Activated CD4-positive, alpha-beta T cell treated with anti-CD3 and anti-CD28 coated beads for 36 hours (primary cell): ENCODE measurements at regions of chr19 and their contacts with region 1.

Region 1: GRCh38 chr19:35612559-35613321 is at the start of gene HAUS5:
- DNase-seq: peak; percentile 98
- ATAC-seq: peak; percentile 96
- H3K4me3 Mint-ChIP-seq: peak within 1 kb of the TSS; percentile 81
- H3K27ac Mint-ChIP-seq: peak within 1 kb of the TSS; percentile 90
- H3K4me1 Mint-ChIP-seq: peaks cover 23% of the 10 kb centered on the region
- H3K27me3 Mint-ChIP-seq: no peaks in the 10 kb centered on the region
- total RNA-seq, gene HAUS5: 39.7 to 41.0 TPM

Region 2: DNA sequence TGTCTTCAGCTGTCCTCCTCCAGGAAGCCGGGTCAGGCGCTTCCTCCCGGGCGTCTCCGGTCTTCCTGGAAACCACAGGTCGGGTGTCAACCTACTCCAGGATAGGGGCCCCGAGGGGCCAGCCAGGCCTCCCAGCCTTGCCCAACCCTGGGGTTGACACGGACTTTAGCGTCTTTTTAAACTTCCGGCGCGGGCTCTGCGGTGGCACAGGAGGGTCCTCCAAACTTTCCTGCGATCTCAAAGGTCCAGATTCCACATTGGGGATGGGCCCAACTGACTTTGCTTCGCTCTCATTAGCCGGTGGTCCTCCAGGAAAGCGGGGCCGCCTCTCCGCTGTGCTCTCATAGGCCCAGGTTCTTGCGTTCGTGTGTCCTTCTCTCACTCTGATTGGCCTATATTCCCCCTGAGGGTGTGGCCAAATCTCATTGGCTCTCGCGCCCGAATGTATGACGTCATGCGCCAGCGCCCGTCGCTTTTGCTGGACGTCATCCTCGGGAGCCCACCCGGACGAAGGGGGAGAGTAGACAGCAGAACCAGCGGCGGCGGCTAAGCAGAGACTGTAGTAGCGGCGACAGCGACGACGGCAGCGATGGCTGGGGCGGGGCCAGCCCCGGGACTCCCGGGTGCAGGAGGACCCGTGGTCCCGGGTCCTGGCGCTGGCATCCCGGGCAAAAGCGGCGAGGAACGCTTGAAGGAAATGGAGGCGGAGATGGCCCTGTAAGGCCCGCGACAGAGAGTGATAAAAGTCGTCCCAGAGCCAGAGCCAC is 16.0 kb after region 1 on chr19 and contains the start of gene RBM42:
- CTCF ChIA-PET with region 1: interaction called, 3 read pairs
- POLR2A ChIA-PET with region 1: interaction called, 3 read pairs
- intact Hi-C with region 1: loop called (anchors 1 kb)
- DNase-seq: peak; percentile 97
- ATAC-seq: peak; percentile 100
- H3K4me3 Mint-ChIP-seq: peak within 1 kb of the TSS; percentile 98
- H3K27ac Mint-ChIP-seq: peak within 1 kb of the TSS; percentile 98
- H3K4me1 Mint-ChIP-seq: peaks cover 12% of the 10 kb centered on the region
- H3K27me3 Mint-ChIP-seq: no peaks in the 10 kb centered on the region
- total RNA-seq, gene RBM42: 87.5 to 94.4 TPM

Region 3: DNA sequence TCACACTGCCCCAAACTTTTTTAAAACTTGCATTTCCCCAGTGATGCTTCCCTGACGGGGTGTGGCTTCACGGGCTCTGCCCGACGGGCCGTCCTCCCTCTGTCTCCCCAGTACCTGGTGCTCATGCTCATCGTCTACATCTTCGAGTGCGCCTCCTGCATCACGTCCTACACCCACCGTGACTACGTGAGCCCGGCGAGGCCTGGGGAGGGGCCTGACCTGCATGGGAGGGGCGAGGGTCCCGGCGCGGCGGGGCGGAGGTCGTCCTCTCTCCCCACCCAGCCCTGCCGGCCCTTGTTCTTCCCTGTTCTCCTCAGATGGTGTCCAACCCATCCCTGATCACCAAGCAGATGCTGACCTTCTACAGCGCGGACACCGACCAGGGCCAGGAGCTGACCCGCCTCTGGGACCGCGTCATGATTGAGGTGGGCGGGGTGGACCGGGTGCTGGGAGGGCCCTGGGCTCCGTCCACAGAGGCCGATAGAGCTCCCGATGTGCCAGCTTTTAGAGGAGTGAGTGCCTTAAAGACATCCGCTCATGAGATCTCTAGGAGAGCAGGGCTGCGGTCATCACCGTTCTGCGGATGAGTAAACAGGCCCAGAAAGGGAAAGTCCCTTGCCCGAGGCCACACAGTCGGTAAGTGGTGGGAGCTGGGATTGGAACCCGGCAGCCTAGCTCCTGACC is 60.5 kb after region 1 on chr19:
- CTCF ChIA-PET with region 1: no interaction called
- POLR2A ChIA-PET with region 1: no interaction called
- intact Hi-C with region 1: loop called in 1 of 2 experiments (anchors 2 kb)
- DNase-seq: peak; percentile 83
- ATAC-seq: peak; percentile 90
- H3K4me3 Mint-ChIP-seq: peak overlapping the region; percentile 71
- H3K27ac Mint-ChIP-seq: no peak overlapping the region
- H3K4me1 Mint-ChIP-seq: peaks cover 9% of the 10 kb centered on the region
- H3K27me3 Mint-ChIP-seq: peaks cover 25% of the 10 kb centered on the region